ENCODE measurements at regions of chr11 and their contacts with region 1.

Region 1: GRCh38 chr11:110173811-110174644 is 80.8 kb downstream of the ZC3H12C start:
- DNase-seq: peak; percentile 69 to 92
- H3K4me3 ChIP-seq: peak overlapping the region in 1 of 4 experiments; percentile 34; a peak in 1 of 8 replicates
- H3K27ac ChIP-seq: no peak overlapping the region
- H3K4me1 ChIP-seq: peaks cover 9 to 32% (median 21%) of the 10 kb centered on the region in 4 experiments
- H3K27me3 ChIP-seq: no peaks in the 10 kb centered on the region
- CTCF ChIP-seq: peak; percentile 69 to 93 (median 81)
- EP300 ChIP-seq: no peak
- POLR2A ChIP-seq: no peak
- RAD21 ChIP-seq: peak; percentile 55 to 67

Region 2: GRCh38 chr11:110053848-110054414 is 120.1 kb before region 1 on chr11:
- CTCF ChIA-PET with region 1: no interaction called
- POLR2A ChIA-PET with region 1: no interaction called
- DNase-seq: peak in 1 of 2 experiments; percentile 55
- H3K4me3 ChIP-seq: no peak overlapping the region
- H3K27ac ChIP-seq: no peak overlapping the region
- H3K4me1 ChIP-seq: no peaks in the 10 kb centered on the region
- H3K27me3 ChIP-seq: no peaks in the 10 kb centered on the region
- CTCF ChIP-seq: no peak
- EP300 ChIP-seq: peak in 1 of 2 experiments; percentile 95; a peak in 1 of 3 replicates
- POLR2A ChIP-seq: no peak
- RAD21 ChIP-seq: no peak

Region 3: GRCh38 chr11:110071197-110071596 is 102.8 kb before region 1 on chr11:
- CTCF ChIA-PET with region 1: no interaction called
- POLR2A ChIA-PET with region 1: no interaction called
- DNase-seq: no peak
- H3K4me3 ChIP-seq: no peak overlapping the region
- H3K27ac ChIP-seq: no peak overlapping the region
- H3K4me1 ChIP-seq: peaks cover 2 to 5% (median 4%) of the 10 kb centered on the region in 4 experiments; a peak in 4 of 7 replicates
- H3K27me3 ChIP-seq: no peaks in the 10 kb centered on the region
- CTCF ChIP-seq: no peak
- EP300 ChIP-seq: no peak
- POLR2A ChIP-seq: no peak
- RAD21 ChIP-seq: no peak

Region 4: DNA sequence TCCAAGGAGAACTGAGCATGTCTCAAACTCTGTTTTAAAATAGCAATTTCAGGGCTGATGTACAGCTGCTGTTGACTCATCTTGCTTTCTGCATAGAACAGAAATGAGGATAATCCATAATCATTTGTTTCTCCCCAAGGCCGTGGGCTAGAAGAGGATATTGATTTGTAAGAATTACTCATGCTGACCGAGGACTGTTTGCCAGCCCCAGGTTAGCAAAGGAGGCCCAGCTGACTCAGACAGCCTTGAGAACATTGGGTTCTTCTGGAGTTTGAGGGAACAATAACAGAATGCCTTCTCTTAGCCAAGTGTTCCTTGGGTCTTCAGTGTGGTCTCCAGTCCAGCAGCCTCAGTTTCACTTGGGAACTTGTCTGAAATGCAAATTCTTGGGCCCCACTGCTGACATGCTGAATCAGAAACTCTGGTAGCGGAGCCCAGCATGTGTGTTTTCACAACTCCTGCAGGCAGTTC is 11.1 kb after region 1 on chr11:
- CTCF ChIA-PET with region 1: interaction called, 46 read pairs
- POLR2A ChIA-PET with region 1: interaction called, 3 read pairs
- DNase-seq: no peak
- H3K4me3 ChIP-seq: no peak overlapping the region
- H3K27ac ChIP-seq: no peak overlapping the region
- H3K4me1 ChIP-seq: peaks cover 0 to 10% (median 9%) of the 10 kb centered on the region in 4 experiments
- H3K27me3 ChIP-seq: no peaks in the 10 kb centered on the region
- CTCF ChIP-seq: no peak
- EP300 ChIP-seq: no peak
- POLR2A ChIP-seq: no peak
- RAD21 ChIP-seq: no peak

Region 5: GRCh38 chr11:110367571-110367970 is 193.5 kb after region 1 on chr11:
- CTCF ChIA-PET with region 1: no interaction called
- POLR2A ChIA-PET with region 1: no interaction called
- DNase-seq: no peak
- H3K4me3 ChIP-seq: no peak overlapping the region
- H3K27ac ChIP-seq: no peak overlapping the region
- H3K4me1 ChIP-seq: peaks cover 0 to 6% (median 4%) of the 10 kb centered on the region in 4 experiments; a peak in 4 of 7 replicates
- H3K27me3 ChIP-seq: no peaks in the 10 kb centered on the region
- CTCF ChIP-seq: no peak
- EP300 ChIP-seq: no peak
- POLR2A ChIP-seq: no peak
- RAD21 ChIP-seq: no peak